Motor neuron (in vitro differentiated cells): ENCODE measurements at regions of chr18 and their contacts with region 1.

Region 1: DNA sequence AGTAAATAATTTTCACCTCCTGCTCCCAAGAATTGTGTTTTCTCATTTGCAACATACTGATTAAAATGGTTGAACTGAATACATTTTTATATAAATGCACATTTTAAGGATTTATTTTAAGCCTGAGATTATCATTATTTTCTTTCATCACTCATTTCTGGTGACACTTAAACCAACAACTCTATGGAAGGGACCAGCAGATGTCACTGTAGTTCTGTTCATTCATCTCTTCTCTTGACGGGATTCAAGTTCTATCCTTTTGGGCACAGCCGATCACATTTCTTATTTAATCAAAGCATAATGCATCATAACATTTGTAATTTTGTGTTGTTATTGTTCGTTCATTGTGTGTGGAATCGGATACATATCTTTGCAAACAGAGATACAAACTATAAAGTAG is 417.9 kb downstream of the HRH4 start:
- ATAC-seq: peak in 7 of 8 experiments; percentile 13 to 67 (median 54)
- H3K4me3 ChIP-seq: no peak overlapping the region
- H3K27ac ChIP-seq: no peak overlapping the region
- H3K4me1 ChIP-seq: peaks cover 21 to 23% of the 10 kb centered on the region in 2 donors

Region 2: GRCh38 chr18:24656050-24656449 is 222.2 kb before region 1 on chr18:
- in situ Hi-C with region 1: no loop called
- ATAC-seq: no peak
- H3K4me3 ChIP-seq: no peak overlapping the region
- H3K27ac ChIP-seq: no peak overlapping the region
- H3K4me1 ChIP-seq: peaks cover 28 to 47% of the 10 kb centered on the region in 2 donors

Region 3: GRCh38 chr18:24725644-24726415 is 152.5 kb before region 1 on chr18:
- in situ Hi-C with region 1: no loop called
- ATAC-seq: peak in 3 of 8 experiments; percentile 27 to 36 (median 34)
- H3K4me3 ChIP-seq: no peak overlapping the region
- H3K27ac ChIP-seq: no peak overlapping the region
- H3K4me1 ChIP-seq: peaks cover 7 to 14% of the 10 kb centered on the region in 2 donors

Region 4: GRCh38 chr18:25164848-25165811 is 286.8 kb after region 1 on chr18:
- in situ Hi-C with region 1: no loop called
- ATAC-seq: peak in 4 of 8 experiments; percentile 50 to 91 (median 87)
- H3K4me3 ChIP-seq: no peak overlapping the region
- H3K27ac ChIP-seq: no peak overlapping the region
- H3K4me1 ChIP-seq: peaks cover 9 to 34% of the 10 kb centered on the region in 2 donors

Region 5: GRCh38 chr18:25349131-25349925 is 471.0 kb after region 1 on chr18:
- in situ Hi-C with region 1: loop called in 2 of 9 experiments (anchors 25 kb)
- ATAC-seq: peak; percentile 9 to 28 (median 16)
- H3K4me3 ChIP-seq: peak overlapping the region; percentile 62 to 87 (median 63)
- H3K27ac ChIP-seq: peak overlapping the region; percentile 75 to 87
- H3K4me1 ChIP-seq: peaks cover 5 to 14% of the 10 kb centered on the region in 2 donors

Region 6: DNA sequence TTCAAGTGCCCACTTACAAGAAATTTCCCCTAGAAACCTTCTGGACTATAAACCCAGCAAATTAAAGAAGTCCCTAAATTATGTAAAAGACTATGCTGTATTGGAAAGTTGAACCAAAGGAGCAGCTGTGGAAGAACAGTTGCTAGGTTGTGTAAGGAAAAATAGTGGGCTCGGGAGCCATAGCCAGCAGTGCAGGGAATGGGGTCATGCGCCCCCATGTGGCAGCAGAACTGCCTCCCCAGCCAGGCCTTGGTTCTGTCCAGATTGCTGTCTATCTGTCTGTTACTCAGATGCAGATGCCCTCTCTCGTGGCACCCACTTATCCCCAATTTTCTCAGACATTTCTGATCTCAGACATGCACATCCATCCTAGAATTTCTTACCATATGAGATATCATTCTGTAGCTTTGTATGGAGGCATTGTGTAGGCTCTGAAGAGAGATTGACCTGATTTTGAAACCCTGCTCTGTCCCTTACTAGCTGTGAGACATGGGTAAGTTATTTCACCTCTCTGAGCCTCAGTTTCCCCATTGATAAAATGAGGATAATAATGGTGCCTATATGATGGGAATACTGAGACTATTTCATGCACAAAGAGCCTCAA is 953.8 kb after region 1 on chr18:
- in situ Hi-C with region 1: loop called in 1 of 9 experiments (anchors 25 kb)
- ATAC-seq: peak; percentile 56 to 95 (median 71)
- H3K4me3 ChIP-seq: no peak overlapping the region
- H3K27ac ChIP-seq: no peak overlapping the region
- H3K4me1 ChIP-seq: peaks cover 2 to 15% of the 10 kb centered on the region in 2 donors

Region 7: GRCh38 chr18:25896178-25896780 is 1018.0 kb after region 1 on chr18:
- in situ Hi-C with region 1: loop called in 1 of 9 experiments (anchors 25 kb)
- ATAC-seq: peak in 6 of 8 experiments; percentile 48 to 79 (median 61)
- H3K4me3 ChIP-seq: no peak overlapping the region
- H3K27ac ChIP-seq: no peak overlapping the region
- H3K4me1 ChIP-seq: no peaks in the 10 kb centered on the region